ENCODE measurements at regions of chrX and their contacts with region 1.

Region 1: GRCh38 chrX:39953883-39954282 is 143.9 kb downstream of the BCOR start:
- DNase-seq: peak; percentile 90
- H3K4me3 Mint-ChIP-seq: peak overlapping the region; percentile 68
- H3K27ac Mint-ChIP-seq: peak overlapping the region; percentile 63
- H3K4me1 Mint-ChIP-seq: peaks cover 35% of the 10 kb centered on the region
- H3K27me3 Mint-ChIP-seq: peaks cover 53% of the 10 kb centered on the region
- CTCF ChIP-seq: no peak

Region 2: DNA sequence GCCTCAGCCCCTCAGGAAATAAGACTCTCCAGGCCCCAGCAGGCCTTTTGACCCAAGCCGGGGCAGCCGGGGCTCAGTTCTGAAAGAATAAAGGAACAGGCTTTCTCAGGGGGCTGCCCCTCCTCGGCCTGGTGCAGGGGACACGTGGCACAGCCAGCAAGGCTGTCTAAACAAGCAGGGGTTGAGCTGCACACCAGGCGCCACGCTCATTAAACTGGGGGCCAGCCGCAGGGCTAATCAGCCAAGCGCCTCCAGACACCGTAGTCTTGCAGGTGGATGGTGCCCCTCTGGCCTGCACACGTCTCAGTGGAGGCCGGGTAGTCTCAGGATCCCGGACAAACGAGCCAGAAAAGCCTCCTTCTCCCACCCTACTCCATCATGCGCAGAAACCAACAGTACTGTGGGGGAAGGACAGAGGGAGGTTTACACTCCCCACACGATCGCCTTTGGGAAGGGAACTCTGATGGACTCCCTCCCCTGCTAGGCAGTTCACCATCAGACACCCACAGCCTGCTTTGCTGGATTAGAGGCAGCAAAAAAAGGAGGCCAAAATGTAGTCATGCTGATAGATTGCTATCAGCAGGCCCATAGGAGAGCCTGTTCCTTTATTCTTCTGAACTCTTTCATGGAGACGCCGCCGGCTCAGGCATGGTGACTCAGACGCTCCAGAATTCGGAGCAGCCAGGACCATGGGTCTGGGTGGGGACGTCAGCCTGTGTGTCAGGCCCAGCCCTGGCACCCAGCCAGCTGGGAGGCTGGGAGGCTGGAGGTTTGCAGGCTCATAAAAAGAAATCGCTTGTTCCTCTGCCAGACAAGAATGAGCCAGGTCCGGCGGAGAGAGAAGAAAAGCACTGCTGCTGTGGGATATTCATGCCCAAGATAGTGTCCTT is 198.5 kb before region 1 on chrX:
- CTCF ChIA-PET with region 1: no interaction called
- POLR2A ChIA-PET with region 1: no interaction called
- intact Hi-C with region 1: loop called (anchors 10 kb)
- DNase-seq: peak; percentile 93
- H3K4me3 Mint-ChIP-seq: no peak overlapping the region
- H3K27ac Mint-ChIP-seq: peak overlapping the region; percentile 16
- H3K4me1 Mint-ChIP-seq: peaks cover 18% of the 10 kb centered on the region
- H3K27me3 Mint-ChIP-seq: peaks cover 18% of the 10 kb centered on the region
- CTCF ChIP-seq: no peak

Region 3: DNA sequence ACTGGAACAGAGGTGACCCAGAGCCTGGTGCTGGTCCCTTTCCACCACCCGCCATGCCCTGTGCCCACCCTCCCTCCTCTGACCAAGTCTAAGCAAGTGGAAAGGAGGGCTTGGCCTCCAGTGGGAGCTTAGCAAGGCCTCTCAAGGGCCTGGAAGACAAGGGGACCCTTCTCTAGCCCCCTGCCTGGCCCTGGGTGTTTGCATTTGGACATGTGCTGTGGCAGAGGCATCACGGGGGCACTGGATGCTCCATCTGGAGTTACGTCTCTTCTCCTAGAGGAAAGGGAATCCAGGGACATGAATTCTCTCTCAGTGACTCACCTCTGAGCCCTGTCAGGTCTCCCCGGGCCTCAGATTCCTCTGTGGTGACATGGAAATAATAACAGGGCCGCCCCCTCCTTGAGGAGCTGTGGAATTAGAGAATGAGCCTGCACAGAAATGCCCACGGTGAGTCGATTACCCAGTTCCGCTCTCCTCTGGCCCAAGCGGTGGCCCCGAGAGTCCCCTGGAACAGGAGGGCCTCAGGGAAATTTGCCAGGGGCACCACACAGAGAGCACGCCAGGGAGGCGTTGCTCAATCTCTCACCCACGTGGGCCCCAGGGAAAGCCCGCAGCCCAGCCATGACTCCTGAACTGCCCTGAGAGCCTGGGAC is 45.8 kb before region 1 on chrX:
- CTCF ChIA-PET with region 1: no interaction called
- POLR2A ChIA-PET with region 1: interaction called, 10 read pairs
- intact Hi-C with region 1: no loop called
- DNase-seq: peak; percentile 90
- H3K4me3 Mint-ChIP-seq: peak overlapping the region; percentile 60
- H3K27ac Mint-ChIP-seq: peak overlapping the region; percentile 10
- H3K4me1 Mint-ChIP-seq: peaks cover 26% of the 10 kb centered on the region
- H3K27me3 Mint-ChIP-seq: peaks cover 57% of the 10 kb centered on the region
- CTCF ChIP-seq: no peak

Region 4: GRCh38 chrX:40013266-40014195 is 59.6 kb after region 1 on chrX:
- CTCF ChIA-PET with region 1: no interaction called
- POLR2A ChIA-PET with region 1: interaction called, 4 read pairs
- intact Hi-C with region 1: loop called (anchors 2 kb)
- DNase-seq: peak; percentile 74
- H3K4me3 Mint-ChIP-seq: peak overlapping the region; percentile 79
- H3K27ac Mint-ChIP-seq: peak overlapping the region; percentile 82
- H3K4me1 Mint-ChIP-seq: peaks cover 6% of the 10 kb centered on the region
- H3K27me3 Mint-ChIP-seq: no peaks in the 10 kb centered on the region
- CTCF ChIP-seq: no peak

Measured in MCF 10A (cell line).